ENCODE measurements at regions of chr1 and their contacts with region 1.

Region 1: DNA sequence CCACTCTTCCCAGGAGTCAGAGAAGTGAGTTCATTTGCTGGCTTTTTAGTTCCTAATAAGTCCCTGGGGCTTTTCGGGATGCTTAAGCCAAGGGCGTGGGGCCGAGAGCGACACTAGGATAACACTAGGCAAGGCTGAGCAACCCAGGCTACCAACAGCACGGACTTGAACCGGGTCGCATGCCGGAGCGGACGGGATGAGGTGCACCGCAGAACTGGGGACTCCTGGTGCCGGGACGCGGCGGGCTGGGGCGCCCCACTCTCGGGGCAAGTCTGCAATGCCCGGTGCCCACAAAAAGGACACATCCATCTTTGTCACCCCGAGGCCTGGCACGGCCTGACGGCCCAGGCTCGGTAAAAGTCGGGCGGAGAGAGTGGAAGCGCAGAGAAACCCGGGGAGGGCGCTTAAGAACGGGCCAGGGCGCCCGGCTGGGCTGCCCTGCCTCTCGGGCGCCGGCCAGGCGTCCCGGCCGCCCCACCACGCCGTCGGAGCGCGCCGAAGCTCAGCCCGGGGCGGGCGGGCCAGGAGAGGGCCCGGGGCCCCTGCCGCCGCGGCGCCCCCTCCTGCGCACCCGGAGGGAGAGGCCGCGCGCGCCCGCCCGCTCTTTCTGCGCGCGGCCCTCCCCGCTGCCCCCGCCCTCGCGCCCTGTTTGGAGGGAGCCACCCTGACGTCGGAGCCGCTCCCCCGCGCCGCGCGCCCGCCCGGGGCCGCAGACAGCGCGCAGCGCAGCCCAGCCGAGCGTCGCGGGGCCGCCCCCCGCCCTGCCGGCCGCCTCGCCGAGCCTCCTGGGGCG is at the start of gene NBL1:
- DNase-seq: no peak
- ATAC-seq: peak; percentile 8
- H3K4me3 ChIP-seq: peak within 1 kb of the TSS; percentile 68 to 83 (median 75)
- H3K27ac ChIP-seq: no peak within 1 kb of the TSS
- H3K4me1 ChIP-seq: peaks cover 53% of the 10 kb centered on the region
- H3K27me3 ChIP-seq: peaks cover 2 to 21% of the 10 kb centered on the region in 2 experiments; a peak in 3 of 5 replicates
- CTCF ChIP-seq: no peak
- EP300 ChIP-seq: no peak
- POLR2A ChIP-seq: no peak
- RAD21 ChIP-seq: no peak
- total RNA-seq, gene NBL1: 1.9 and 2.7 TPM in 2 replicates

Region 2: DNA sequence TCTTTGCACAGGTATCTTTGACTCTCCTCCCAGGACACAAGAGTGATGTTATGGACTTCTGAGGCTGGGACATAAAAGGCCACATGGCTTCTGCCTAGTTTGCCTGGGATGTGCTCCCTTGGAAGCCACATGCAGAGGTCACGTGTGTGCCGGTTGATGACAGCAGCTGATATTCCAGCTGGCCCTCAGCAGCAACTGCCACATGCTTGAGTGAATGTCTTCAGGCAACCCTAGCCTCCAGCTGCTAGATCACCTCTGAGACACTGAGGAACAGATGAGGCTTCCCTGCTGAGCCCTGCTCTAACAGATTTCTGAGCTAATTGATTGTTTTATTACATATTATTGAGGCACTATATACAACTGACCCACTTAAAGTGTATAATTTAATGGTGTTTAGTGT is 343.6 kb before region 1 on chr1:
- CTCF ChIA-PET with region 1: no interaction called
- POLR2A ChIA-PET with region 1: no interaction called
- in situ Hi-C with region 1: no loop called
- intact Hi-C with region 1: no loop called
- DNase-seq: no peak
- ATAC-seq: no peak
- H3K4me3 ChIP-seq: no peak overlapping the region
- H3K27ac ChIP-seq: no peak overlapping the region
- H3K4me1 ChIP-seq: peaks cover 7% of the 10 kb centered on the region; the same call in 1 of the 2 replicates
- H3K27me3 ChIP-seq: no peaks in the 10 kb centered on the region
- CTCF ChIP-seq: no peak
- EP300 ChIP-seq: no peak
- POLR2A ChIP-seq: no peak
- RAD21 ChIP-seq: no peak

Region 3: GRCh38 chr1:19620786-19621185 is 23.0 kb before region 1 on chr1:
- CTCF ChIA-PET with region 1: no interaction called
- POLR2A ChIA-PET with region 1: interaction called, 9 read pairs
- in situ Hi-C with region 1: no loop called
- intact Hi-C with region 1: loop called (anchors 1 kb)
- DNase-seq: no peak
- ATAC-seq: no peak
- H3K4me3 ChIP-seq: no peak overlapping the region
- H3K27ac ChIP-seq: no peak overlapping the region
- H3K4me1 ChIP-seq: peaks cover 63% of the 10 kb centered on the region
- H3K27me3 ChIP-seq: no peaks in the 10 kb centered on the region
- CTCF ChIP-seq: no peak
- EP300 ChIP-seq: no peak
- POLR2A ChIP-seq: no peak
- RAD21 ChIP-seq: no peak